Activated naive CD4-positive, alpha-beta T cell treated with anti-CD3 and anti-CD28 coated beads for 36 hours (primary cell): ENCODE measurements at regions of chr22 and their contacts with region 1.

Region 1: GRCh38 chr22:25404928-25405816 is 159.3 kb upstream of the GRK3 start:
- DNase-seq: peak; percentile 70
- H3K4me3 Mint-ChIP-seq: peak overlapping the region; percentile 80
- H3K27ac Mint-ChIP-seq: no peak overlapping the region
- H3K4me1 Mint-ChIP-seq: peaks cover 27% of the 10 kb centered on the region
- H3K27me3 Mint-ChIP-seq: no peaks in the 10 kb centered on the region

Region 2: GRCh38 chr22:25362215-25362882 is 42.8 kb before region 1 on chr22:
- CTCF ChIA-PET with region 1: interaction called, 4 read pairs
- intact Hi-C with region 1: loop called (anchors 5 kb)
- DNase-seq: peak; percentile 83
- H3K4me3 Mint-ChIP-seq: no peak overlapping the region
- H3K27ac Mint-ChIP-seq: no peak overlapping the region
- H3K4me1 Mint-ChIP-seq: no peaks in the 10 kb centered on the region
- H3K27me3 Mint-ChIP-seq: no peaks in the 10 kb centered on the region

Region 3: DNA sequence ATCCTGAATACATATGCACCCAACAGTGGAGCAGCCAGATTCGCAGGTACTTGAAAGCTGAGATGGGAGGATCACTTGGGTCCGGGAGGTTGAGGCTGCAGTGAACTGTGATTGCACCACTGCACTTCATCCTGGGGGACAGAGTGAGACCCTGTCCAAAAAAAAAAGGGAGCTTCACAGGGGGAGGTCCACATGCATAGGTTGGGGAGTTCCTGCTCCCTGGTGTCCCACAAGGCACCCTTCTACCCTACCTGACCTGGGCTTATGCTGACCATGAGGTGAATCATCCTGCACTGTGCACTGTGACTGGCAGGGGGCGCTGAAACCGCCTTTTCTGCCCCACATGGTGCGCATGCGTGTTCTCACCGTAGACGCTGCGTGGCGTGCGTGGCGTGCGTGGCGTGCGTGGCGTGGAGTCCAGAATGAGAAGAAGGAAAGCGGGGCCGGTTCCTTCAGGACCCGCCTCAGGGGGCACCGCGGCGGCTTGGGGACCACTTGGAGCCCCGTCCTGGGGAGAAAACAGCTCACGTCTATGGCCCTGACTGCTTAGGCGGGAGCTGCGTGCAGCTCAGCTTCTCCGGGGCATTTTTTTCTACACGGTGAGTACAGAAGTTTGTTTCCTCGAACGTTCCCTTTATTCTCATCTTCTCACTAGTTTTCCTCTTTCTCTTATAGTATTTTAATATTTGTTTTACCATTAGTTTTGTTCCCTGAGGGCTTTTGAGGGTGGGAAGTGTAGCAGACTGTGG is 42.7 kb after region 1 on chr22:
- CTCF ChIA-PET with region 1: interaction called, 5 read pairs
- intact Hi-C with region 1: loop called (anchors 5 kb)
- DNase-seq: peak; percentile 94
- H3K4me3 Mint-ChIP-seq: peak overlapping the region; percentile 86
- H3K27ac Mint-ChIP-seq: peak overlapping the region; percentile 91
- H3K4me1 Mint-ChIP-seq: peaks cover 42% of the 10 kb centered on the region
- H3K27me3 Mint-ChIP-seq: no peaks in the 10 kb centered on the region

Region 4: DNA sequence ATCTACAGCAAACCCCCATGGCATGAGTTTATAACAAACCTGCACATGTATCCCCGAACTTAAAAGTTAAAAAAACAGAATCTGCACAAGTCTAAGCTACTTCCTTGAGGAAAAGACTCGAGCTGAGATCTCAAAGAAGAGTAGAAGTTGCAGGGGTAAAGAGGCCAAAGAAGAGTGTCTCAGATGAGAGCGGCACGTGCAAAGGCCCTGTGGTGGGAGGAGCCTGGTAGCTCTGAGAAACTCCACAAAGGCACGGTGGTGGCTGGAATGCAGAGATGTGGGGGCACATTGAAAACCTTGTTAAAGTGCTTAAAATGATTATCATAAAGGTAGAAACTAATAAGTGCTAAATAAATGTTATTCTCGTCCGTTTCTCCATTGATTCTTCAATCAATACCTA is 56.1 kb after region 1 on chr22:
- CTCF ChIA-PET with region 1: no interaction called
- intact Hi-C with region 1: no loop called
- DNase-seq: no peak
- H3K4me3 Mint-ChIP-seq: no peak overlapping the region
- H3K27ac Mint-ChIP-seq: no peak overlapping the region
- H3K4me1 Mint-ChIP-seq: peaks cover 6% of the 10 kb centered on the region
- H3K27me3 Mint-ChIP-seq: no peaks in the 10 kb centered on the region